CD4-positive, alpha-beta memory T cell (primary cell): ENCODE measurements at regions of chr19 and their contacts with region 1.

Region 1: GRCh38 chr19:21020298-21021227 is at the start of gene ZNF430:
- DNase-seq: peak; percentile 93 to 97 (median 93)
- H3K4me3 ChIP-seq: peak within 1 kb of the TSS; percentile 92 to 98
- H3K4me3 Mint-ChIP-seq: peak within 1 kb of the TSS; percentile 99 to 100 (median 100)
- H3K27ac ChIP-seq: peak within 1 kb of the TSS; percentile 95
- H3K27ac Mint-ChIP-seq: peak within 1 kb of the TSS; percentile 100
- H3K4me1 ChIP-seq: peaks cover 43% of the 10 kb centered on the region
- H3K4me1 Mint-ChIP-seq: peaks cover 26 to 53% (median 39%) of the 10 kb centered on the region in 4 donors
- H3K27me3 ChIP-seq: no peaks in the 10 kb centered on the region
- H3K27me3 Mint-ChIP-seq: no peaks in the 10 kb centered on the region
- total RNA-seq, gene ZNF430: 41.9 to 50.3 TPM

Region 2: DNA sequence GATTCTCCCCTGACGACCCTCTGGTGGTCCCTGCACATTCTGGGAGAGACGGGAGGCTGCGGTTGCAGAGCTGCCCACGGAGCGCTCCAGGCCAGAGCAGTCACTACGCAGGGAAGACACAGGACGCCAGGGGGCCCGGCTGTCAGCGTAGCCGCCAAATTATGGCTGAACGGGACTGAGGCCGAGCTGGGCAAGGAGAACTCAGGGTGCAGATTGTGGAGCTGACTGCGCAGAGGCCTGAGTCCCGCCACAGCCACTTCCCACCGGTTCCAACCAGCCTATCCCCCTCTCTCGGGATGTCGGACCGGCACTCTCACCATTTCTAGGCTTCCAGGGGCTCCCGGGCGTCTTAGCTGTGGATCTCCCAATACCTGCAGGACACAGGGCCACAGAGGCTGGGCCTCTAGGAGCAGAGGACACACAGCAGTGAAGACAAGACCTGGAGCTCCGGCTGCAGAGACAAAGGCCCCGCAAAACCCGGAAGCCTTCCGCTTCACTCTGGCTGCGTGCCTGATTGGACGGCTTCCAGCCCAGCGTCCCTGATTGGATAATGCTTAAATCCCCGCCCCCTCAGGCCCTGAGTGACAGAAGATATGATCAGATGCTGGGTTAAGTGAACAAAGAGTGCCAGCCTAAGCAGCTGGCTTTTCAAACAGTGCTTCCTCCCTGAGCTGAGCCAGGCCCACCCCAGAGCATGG is 455.1 kb before region 1 on chr19 and contains the start of gene ZNF737:
- CTCF ChIA-PET with region 1: no interaction called
- POLR2A ChIA-PET with region 1: interaction called, 11 read pairs
- intact Hi-C with region 1: no loop called
- DNase-seq: peak; percentile 91 to 95 (median 93)
- H3K4me3 ChIP-seq: peak within 1 kb of the TSS; percentile 57 to 95
- H3K4me3 Mint-ChIP-seq: peak within 1 kb of the TSS; percentile 99 to 100 (median 99)
- H3K27ac ChIP-seq: peak within 1 kb of the TSS; percentile 73
- H3K27ac Mint-ChIP-seq: peak within 1 kb of the TSS; percentile 97 to 99 (median 98)
- H3K4me1 ChIP-seq: no peaks in the 10 kb centered on the region
- H3K4me1 Mint-ChIP-seq: peaks cover 12 to 43% (median 29%) of the 10 kb centered on the region in 4 donors
- H3K27me3 ChIP-seq: no peaks in the 10 kb centered on the region
- H3K27me3 Mint-ChIP-seq: no peaks in the 10 kb centered on the region
- total RNA-seq, gene ZNF737: 41.3 to 44.7 TPM

Region 3: DNA sequence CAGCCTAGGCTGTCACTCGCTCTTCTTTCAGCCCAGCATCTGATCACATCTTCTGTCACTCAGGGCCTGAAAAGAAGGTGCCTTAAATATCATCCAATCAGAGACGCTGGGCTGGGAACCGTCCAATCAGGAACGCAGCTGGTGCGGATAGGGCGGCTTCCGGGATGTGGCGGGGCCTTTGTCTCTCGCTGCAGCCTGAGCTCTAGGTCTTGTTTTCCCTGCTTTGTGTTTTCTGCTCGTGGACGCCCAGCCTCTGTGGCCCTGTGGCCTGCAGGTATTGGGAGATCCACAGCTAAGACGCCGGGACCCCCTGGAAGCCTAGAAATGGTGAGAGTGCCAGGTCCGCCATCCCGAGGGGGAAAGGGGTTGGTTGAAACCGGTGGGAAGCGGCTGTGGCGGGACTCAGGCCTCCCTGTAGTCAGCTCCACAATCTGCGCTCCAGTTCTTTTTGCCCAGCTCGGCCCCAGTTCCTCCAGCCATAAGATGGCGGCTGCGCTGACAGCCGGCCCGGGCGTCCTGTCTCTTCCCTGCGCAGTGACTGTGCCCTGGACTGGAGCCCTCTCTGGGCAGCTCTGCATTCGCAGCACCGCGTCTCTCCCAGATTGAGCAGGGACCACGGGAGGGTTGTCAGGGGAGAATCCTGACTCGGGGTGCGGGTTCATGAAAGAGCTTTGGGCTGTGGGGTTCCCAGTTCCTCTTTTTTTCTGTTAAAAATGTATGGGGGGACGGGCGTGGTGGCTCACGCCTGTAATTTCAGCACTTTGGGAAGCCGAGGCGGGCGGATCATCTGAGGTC is 97.3 kb before region 1 on chr19 and contains the start of gene ZNF85:
- CTCF ChIA-PET with region 1: no interaction called
- POLR2A ChIA-PET with region 1: interaction called, 19 read pairs
- intact Hi-C with region 1: loop called (anchors 1 kb)
- DNase-seq: peak; percentile 90 to 94 (median 91)
- H3K4me3 ChIP-seq: peak within 1 kb of the TSS; percentile 63 to 81
- H3K4me3 Mint-ChIP-seq: peak within 1 kb of the TSS; percentile 94 to 98 (median 96)
- H3K27ac ChIP-seq: peak within 1 kb of the TSS; percentile 62
- H3K27ac Mint-ChIP-seq: peak within 1 kb of the TSS; percentile 86 to 97 (median 96)
- H3K4me1 ChIP-seq: peaks cover 4% of the 10 kb centered on the region
- H3K4me1 Mint-ChIP-seq: peaks cover 5 to 14% (median 10%) of the 10 kb centered on the region in 4 donors
- H3K27me3 ChIP-seq: no peaks in the 10 kb centered on the region
- H3K27me3 Mint-ChIP-seq: no peaks in the 10 kb centered on the region
- total RNA-seq, gene ZNF85: 6.5 to 7.6 TPM

Region 4: DNA sequence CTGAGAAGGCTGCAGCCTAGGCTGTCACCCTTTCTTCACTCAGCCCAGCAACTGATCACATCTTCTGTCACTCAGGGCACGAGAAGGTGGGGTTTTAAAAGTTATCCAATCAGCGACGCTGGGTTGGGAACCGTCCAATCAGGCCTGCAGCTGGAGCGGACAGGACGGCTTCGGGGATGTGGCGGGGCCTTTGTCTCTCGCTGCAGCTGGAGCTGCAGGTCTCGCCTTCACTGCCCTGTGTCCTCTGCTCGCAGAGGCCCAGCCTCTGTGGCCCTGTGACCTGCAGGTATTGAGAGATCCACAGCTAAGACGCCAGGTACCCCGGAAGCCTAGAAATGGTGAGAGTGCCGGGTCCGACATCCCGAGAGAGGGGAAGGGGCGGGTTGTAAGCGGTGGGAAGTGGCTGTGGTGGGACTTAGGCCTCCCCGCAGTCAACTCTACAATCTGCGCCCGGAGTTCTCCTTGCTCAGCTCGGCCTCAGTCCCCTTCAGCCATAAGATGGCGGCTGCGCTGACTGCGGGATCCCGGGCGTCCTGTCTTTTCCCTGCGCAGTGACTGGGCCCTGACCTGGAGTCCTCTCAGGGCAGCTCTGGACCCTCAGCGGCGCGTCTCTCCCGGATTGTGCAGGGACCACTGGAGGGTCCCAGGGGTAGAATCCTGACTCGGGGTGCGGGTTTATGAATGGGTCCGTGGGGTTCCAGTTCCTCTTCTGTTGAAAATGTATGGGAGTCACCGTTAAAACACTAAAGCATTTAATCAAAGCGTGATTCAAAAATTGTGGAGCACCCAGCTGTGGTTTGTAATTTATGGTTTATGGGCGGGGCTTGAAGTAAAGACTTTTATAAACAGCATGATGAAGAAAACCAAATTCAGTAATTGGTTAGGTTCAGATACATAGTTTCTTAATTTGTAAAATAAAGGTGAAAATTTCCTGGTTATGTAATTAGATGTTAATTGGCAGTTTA is 61.7 kb after region 1 on chr19 and contains the start of gene ZNF714:
- CTCF ChIA-PET with region 1: no interaction called
- POLR2A ChIA-PET with region 1: interaction called, 15 read pairs
- intact Hi-C with region 1: loop called (anchors 5 kb)
- DNase-seq: peak; percentile 81 to 90 (median 86)
- H3K4me3 ChIP-seq: peak within 1 kb of the TSS; percentile 39 to 80
- H3K4me3 Mint-ChIP-seq: peak within 1 kb of the TSS; percentile 93 to 100 (median 99)
- H3K27ac ChIP-seq: peak within 1 kb of the TSS; percentile 61
- H3K27ac Mint-ChIP-seq: peak within 1 kb of the TSS; percentile 89 to 98 (median 94)
- H3K4me1 ChIP-seq: no peaks in the 10 kb centered on the region
- H3K4me1 Mint-ChIP-seq: peaks cover 4 to 21% (median 14%) of the 10 kb centered on the region in 4 donors
- H3K27me3 ChIP-seq: no peaks in the 10 kb centered on the region
- H3K27me3 Mint-ChIP-seq: no peaks in the 10 kb centered on the region
- total RNA-seq, gene ZNF714: 11.5 to 14.7 TPM

Region 5: GRCh38 chr19:21127001-21127400 is 106.4 kb after region 1 on chr19:
- CTCF ChIA-PET with region 1: no interaction called
- POLR2A ChIA-PET with region 1: no interaction called
- intact Hi-C with region 1: no loop called
- DNase-seq: no peak
- H3K4me3 ChIP-seq: no peak overlapping the region
- H3K4me3 Mint-ChIP-seq: no peak overlapping the region
- H3K27ac ChIP-seq: no peak overlapping the region
- H3K27ac Mint-ChIP-seq: no peak overlapping the region
- H3K4me1 ChIP-seq: no peaks in the 10 kb centered on the region
- H3K4me1 Mint-ChIP-seq: no peaks in the 10 kb centered on the region
- H3K27me3 ChIP-seq: no peaks in the 10 kb centered on the region
- H3K27me3 Mint-ChIP-seq: no peaks in the 10 kb centered on the region

Region 6: GRCh38 chr19:21396893-21397572 is 376.5 kb after region 1 on chr19 and contains the start of gene ZNF493:
- CTCF ChIA-PET with region 1: no interaction called
- POLR2A ChIA-PET with region 1: interaction called, 4 read pairs
- intact Hi-C with region 1: loop called (anchors 2 kb)
- DNase-seq: peak; percentile 92 to 95 (median 92)
- H3K4me3 ChIP-seq: peak within 1 kb of the TSS; percentile 10 to 76
- H3K4me3 Mint-ChIP-seq: peak within 1 kb of the TSS; percentile 85 to 99 (median 97)
- H3K27ac ChIP-seq: peak within 1 kb of the TSS; percentile 69
- H3K27ac Mint-ChIP-seq: peak within 1 kb of the TSS; percentile 82 to 96 (median 90)
- H3K4me1 ChIP-seq: peaks cover 19% of the 10 kb centered on the region
- H3K4me1 Mint-ChIP-seq: peaks cover 18 to 44% (median 30%) of the 10 kb centered on the region in 4 donors
- H3K27me3 ChIP-seq: no peaks in the 10 kb centered on the region
- H3K27me3 Mint-ChIP-seq: no peaks in the 10 kb centered on the region
- total RNA-seq, gene ZNF493: 57.4 to 61.7 TPM

Region 7: GRCh38 chr19:21851596-21852345 is 831.2 kb after region 1 on chr19:
- CTCF ChIA-PET with region 1: no interaction called
- POLR2A ChIA-PET with region 1: interaction called, 3 read pairs
- intact Hi-C with region 1: loop called (anchors 5 kb)
- DNase-seq: peak; percentile 87 to 93 (median 87)
- H3K4me3 ChIP-seq: peak overlapping the region; percentile 7 to 91
- H3K4me3 Mint-ChIP-seq: peak overlapping the region; percentile 93 to 98 (median 94)
- H3K27ac ChIP-seq: peak overlapping the region; percentile 83
- H3K27ac Mint-ChIP-seq: peak overlapping the region; percentile 89 to 95 (median 94)
- H3K4me1 ChIP-seq: peaks cover 10% of the 10 kb centered on the region
- H3K4me1 Mint-ChIP-seq: peaks cover 13 to 29% (median 20%) of the 10 kb centered on the region in 4 donors
- H3K27me3 ChIP-seq: no peaks in the 10 kb centered on the region
- H3K27me3 Mint-ChIP-seq: peaks cover 0 to 1% of the 10 kb centered on the region in 2 donors